OCI-LY7 (cell line): ENCODE measurements at regions of chr13 and their contacts with region 1.

Region 1: GRCh38 chr13:102913914-102914313 is 68.1 kb downstream of the ERCC5 start:
- DNase-seq: no peak
- H3K4me3 ChIP-seq: no peak overlapping the region
- H3K27ac ChIP-seq: no peak overlapping the region
- H3K4me1 ChIP-seq: peaks cover 3% of the 10 kb centered on the region
- CTCF ChIP-seq: no peak

Region 2: GRCh38 chr13:103140001-103140671 is 226.2 kb after region 1 on chr13:
- CTCF ChIA-PET with region 1: no interaction called
- POLR2A ChIA-PET with region 1: interaction called, 4 read pairs
- intact Hi-C with region 1: loop called (anchors 1 kb)
- DNase-seq: peak; percentile 72
- H3K4me3 ChIP-seq: no peak overlapping the region
- H3K27ac ChIP-seq: no peak overlapping the region
- H3K4me1 ChIP-seq: peaks cover 3% of the 10 kb centered on the region
- CTCF ChIP-seq: peak; percentile 79